Dorsolateral prefrontal cortex (tissue), 120 donors: ENCODE measurements at regions of chr7 and their contacts with region 1.

Region 1: DNA sequence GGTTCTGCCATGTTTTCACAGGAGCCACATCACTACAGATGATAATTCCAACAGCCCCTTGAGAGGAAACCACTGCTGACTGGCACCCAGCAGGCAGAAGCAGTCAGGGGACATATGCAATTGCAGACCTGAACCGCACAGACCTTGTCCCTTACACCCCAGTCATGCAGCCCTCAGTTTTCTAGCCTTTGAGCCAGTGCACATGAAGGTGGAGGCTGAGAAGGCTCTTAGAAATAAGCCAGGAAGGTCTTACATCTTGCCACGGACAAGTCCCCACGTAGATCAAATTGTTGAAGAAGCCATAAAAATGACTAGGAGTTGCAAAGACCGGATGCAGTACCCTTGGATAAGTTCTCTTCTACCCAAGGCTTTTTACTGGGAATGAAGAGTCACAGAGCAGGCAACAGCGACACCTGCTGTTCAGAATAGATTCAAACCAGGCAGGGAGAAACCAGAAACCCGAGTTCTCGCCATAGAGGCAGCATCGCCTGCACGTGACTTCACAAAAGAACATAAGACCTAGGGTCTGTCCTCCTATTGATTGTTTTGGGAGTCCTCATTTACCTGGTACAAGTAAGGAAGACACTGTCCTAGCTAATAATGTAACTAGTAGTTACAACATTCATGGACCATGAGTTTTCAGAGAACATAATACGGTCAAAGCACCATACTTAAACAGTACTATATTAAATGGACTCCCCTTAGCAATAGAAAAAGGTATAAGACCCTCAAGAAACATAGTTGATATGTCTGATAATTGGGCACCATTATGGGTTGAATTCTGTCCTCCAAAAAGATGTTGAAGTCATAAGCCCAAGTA is 11.1 kb downstream of the STEAP1B start:
- DNase-seq: peak; percentile 58 to 88 (median 76)
- H3K4me3 ChIP-seq: peak overlapping the region in 2 of 59 donors; percentile 1 to 30
- H3K27ac ChIP-seq: peak overlapping the region in 29 of 59 donors; percentile 3 to 78 (median 33)
- H3K27me3 ChIP-seq: no peaks in the 10 kb centered on the region
- CTCF ChIP-seq: peak; percentile 90 to 99 (median 97)

Region 2: GRCh38 chr7:22103255-22103969 is 385.4 kb before region 1 on chr7:
- intact Hi-C with region 1: loop called (anchors 2 kb)
- DNase-seq: peak; percentile 55 to 87 (median 77)
- H3K4me3 ChIP-seq: peak overlapping the region in 6 of 59 donors; percentile 7 to 40 (median 21)
- H3K27ac ChIP-seq: peak overlapping the region in 51 of 59 donors; percentile 5 to 100 (median 99)
- H3K27me3 ChIP-seq: no peaks in the 10 kb centered on the region
- CTCF ChIP-seq: peak; percentile 64 to 95 (median 88)

Region 3: GRCh38 chr7:22110227-22110839 is 378.5 kb before region 1 on chr7:
- intact Hi-C with region 1: loop called in 1 of 2 experiments (anchors 2 kb)
- DNase-seq: peak; percentile 36 to 92 (median 76)
- H3K4me3 ChIP-seq: peak overlapping the region in 15 of 59 donors; percentile 4 to 56 (median 22)
- H3K27ac ChIP-seq: peak overlapping the region; percentile 35 to 100 (median 99)
- H3K27me3 ChIP-seq: no peaks in the 10 kb centered on the region
- CTCF ChIP-seq: peak; percentile 75 to 99 (median 90)

Region 4: GRCh38 chr7:22549667-22550513 is 61.0 kb after region 1 on chr7:
- intact Hi-C with region 1: no loop called
- DNase-seq: no peak
- H3K4me3 ChIP-seq: peak overlapping the region in 55 of 59 donors; percentile 1 to 63 (median 37)
- H3K27ac ChIP-seq: no peak overlapping the region
- H3K27me3 ChIP-seq: peaks cover 0 to 63% (median 34%) of the 10 kb centered on the region in 45 donors
- CTCF ChIP-seq: peak in 12 of 56 donors; percentile 45 to 82 (median 56)